CD4-positive, alpha-beta T cell (primary cell): ENCODE measurements at regions of chr10 and their contacts with region 1.

Region 1: DNA sequence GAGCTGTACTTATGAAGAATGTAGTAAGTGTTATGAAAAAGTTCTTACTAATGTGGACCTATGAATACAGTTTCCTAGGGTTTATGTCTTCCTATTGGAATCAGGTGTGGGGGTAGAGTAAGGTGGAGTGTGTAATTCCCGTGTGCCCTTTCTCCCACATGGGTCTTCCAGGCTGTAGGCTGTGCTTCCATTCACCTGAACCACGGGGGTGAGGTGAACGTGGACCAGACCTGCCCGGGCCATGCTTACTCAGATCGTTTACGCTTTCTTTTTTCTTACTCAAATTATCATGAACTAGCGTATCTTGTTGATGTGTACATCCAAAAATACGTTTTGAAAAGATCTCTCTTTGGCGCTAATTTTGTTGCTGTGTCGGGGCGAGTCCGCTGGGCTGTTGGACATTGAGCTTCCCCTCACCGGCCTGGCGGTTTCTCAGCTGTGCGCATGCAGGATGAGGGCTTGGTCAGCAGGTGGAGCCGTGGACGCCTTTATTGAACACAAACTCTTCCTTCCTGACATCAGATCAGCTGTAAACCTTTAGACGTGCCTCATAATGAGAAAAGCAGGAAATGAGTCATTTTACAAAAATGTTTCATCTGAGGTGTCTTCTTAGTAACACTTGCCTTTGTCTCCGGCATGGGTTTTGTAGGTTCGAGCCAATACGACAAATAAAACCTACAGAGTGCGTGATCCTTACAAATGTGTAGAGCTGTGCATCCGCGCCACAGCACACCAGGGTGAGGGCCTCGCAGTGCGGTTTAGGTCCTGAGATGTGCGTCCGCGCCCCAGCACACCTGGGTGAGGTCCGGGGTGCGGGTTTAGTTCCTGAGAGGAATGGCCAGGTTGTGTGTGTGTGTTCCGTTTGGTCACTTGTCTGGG is 53.8 kb downstream of the WDR37 start:
- DNase-seq: peak; percentile 62 to 90 (median 72)
- ATAC-seq: peak; percentile 90
- H3K4me3 ChIP-seq: peak overlapping the region; percentile 27
- H3K4me3 Mint-ChIP-seq: peak overlapping the region; percentile 11
- H3K27ac ChIP-seq: peak overlapping the region; percentile 71 to 85
- H3K27ac Mint-ChIP-seq: peak overlapping the region; percentile 79
- H3K4me1 ChIP-seq: peaks cover 13% of the 10 kb centered on the region
- H3K4me1 Mint-ChIP-seq: peaks cover 26% of the 10 kb centered on the region
- H3K27me3 ChIP-seq: no peaks in the 10 kb centered on the region
- H3K27me3 Mint-ChIP-seq: no peaks in the 10 kb centered on the region
- CTCF ChIP-seq: peak; percentile 86

Region 2: GRCh38 chr10:1380088-1380651 is 270.1 kb after region 1 on chr10:
- CTCF ChIA-PET with region 1: no interaction called
- POLR2A ChIA-PET with region 1: no interaction called
- intact Hi-C with region 1: loop called in 1 of 2 experiments (anchors 10 kb)
- DNase-seq: peak in 1 of 14 experiments; percentile 19
- ATAC-seq: no peak
- H3K4me3 ChIP-seq: no peak overlapping the region
- H3K4me3 Mint-ChIP-seq: no peak overlapping the region
- H3K27ac ChIP-seq: no peak overlapping the region
- H3K27ac Mint-ChIP-seq: no peak overlapping the region
- H3K4me1 ChIP-seq: no peaks in the 10 kb centered on the region
- H3K4me1 Mint-ChIP-seq: no peaks in the 10 kb centered on the region
- H3K27me3 ChIP-seq: peaks cover 15 to 28% of the 10 kb centered on the region in 2 experiments
- H3K27me3 Mint-ChIP-seq: peaks cover 57% of the 10 kb centered on the region
- CTCF ChIP-seq: no peak

Region 3: DNA sequence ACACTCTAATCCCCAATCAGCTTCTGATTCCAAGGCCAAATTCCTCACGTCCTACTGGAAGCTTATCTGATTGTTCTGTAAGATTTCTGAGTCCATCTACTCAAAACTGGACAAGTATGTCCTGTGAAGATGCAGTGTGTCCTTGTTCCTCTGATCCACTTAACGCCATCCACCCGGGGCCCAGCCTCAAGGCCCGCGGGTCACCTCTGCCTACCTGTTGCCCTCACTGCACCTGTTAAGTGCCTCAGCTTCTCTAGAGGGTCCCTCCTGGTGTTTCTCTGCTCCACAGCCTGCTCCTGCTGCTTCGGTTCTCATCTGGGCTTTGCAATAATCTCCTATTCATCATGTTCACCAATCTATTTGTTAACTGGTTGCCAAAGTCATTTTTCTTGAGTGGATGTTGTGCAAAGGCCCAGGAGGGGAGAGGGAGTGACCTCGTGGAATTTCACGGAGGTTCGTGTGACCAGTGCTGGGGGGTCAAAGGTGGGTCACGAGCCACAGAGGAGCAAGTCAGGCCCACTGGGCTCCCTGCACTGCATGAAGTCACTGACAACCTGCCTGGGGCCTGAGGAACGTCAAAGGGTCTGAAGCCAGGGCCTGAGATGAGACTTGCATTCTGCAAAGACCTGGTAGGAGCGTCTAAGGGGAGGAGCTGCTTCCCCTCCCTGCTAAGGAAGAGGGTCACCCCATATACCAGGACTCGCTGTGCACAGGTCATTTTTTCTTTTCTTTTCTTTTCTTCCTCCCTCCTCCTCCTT is 284.3 kb after region 1 on chr10:
- CTCF ChIA-PET with region 1: no interaction called
- POLR2A ChIA-PET with region 1: no interaction called
- intact Hi-C with region 1: loop called (anchors 2 to 10 kb)
- DNase-seq: no peak
- ATAC-seq: no peak
- H3K4me3 ChIP-seq: no peak overlapping the region
- H3K4me3 Mint-ChIP-seq: no peak overlapping the region
- H3K27ac ChIP-seq: no peak overlapping the region
- H3K27ac Mint-ChIP-seq: no peak overlapping the region
- H3K4me1 ChIP-seq: no peaks in the 10 kb centered on the region
- H3K4me1 Mint-ChIP-seq: no peaks in the 10 kb centered on the region
- H3K27me3 ChIP-seq: no peaks in the 10 kb centered on the region
- H3K27me3 Mint-ChIP-seq: peaks cover 6% of the 10 kb centered on the region
- CTCF ChIP-seq: no peak

Region 4: DNA sequence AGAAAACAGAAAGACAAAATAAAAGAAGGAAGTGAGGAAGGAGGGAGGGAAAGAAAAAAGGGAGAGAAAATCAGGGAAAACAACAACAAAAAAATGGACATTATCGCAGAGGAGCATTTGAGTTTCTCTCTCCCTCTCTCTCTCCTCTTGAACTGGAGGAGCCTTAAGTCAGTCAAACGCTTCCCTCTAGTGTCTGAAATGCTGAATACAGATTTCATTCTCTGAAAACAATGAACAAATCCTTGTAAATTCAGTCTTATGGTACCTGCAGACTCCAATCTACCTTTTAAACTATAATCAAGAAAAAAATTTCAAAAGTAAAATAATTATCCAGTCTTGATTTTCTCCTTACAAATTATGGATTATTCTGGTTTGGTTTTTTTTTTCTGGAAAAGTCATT is 1868.1 kb after region 1 on chr10:
- CTCF ChIA-PET with region 1: no interaction called
- POLR2A ChIA-PET with region 1: no interaction called
- intact Hi-C with region 1: loop called in 1 of 2 experiments (anchors 5 kb)
- DNase-seq: peak in 3 of 14 experiments; percentile 15 to 39 (median 32)
- ATAC-seq: no peak
- H3K4me3 ChIP-seq: no peak overlapping the region
- H3K4me3 Mint-ChIP-seq: no peak overlapping the region
- H3K27ac ChIP-seq: no peak overlapping the region
- H3K27ac Mint-ChIP-seq: no peak overlapping the region
- H3K4me1 ChIP-seq: no peaks in the 10 kb centered on the region
- H3K4me1 Mint-ChIP-seq: no peaks in the 10 kb centered on the region
- H3K27me3 ChIP-seq: no peaks in the 10 kb centered on the region
- H3K27me3 Mint-ChIP-seq: no peaks in the 10 kb centered on the region
- CTCF ChIP-seq: peak; percentile 42

Region 5: DNA sequence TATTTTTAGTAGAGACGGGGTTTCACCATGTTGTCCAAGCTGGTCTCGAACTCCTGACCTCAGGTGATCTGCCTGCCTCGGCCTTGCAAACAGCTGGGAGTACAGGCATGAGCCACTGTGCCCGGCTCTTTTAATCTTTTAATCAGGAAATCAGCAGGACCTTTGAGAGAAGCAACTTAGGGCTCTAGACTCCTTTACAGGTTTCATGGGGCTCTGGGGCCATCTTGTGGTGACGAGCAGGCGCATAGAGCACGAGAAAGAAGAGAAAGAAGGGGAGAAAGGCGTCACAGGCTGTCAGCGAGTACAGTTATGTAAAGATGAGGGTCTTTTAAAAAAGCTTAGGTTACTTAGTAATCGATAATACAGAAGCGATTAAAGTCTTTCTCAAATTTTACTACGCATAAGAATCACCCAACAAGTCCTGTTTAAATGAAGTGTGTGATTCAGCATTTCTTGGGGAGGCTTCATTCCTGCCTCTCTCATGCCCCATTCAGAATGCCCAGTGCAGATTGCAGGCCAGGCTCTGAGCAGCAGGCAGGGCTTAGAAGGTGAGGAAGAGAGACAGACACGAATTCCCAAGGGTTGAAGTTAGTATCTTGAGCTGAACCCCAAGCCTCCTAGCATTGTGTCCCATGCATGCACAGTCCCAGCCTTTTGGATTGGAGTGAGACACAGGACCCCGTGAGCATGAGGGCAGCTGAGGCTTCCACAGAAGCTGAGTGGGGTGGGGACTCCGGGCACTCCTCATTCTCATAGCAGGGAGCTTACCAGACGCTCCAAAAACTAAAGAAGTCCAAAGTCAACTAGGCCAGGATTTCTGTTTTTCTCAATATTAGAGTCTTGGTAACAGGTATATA is 1933.7 kb after region 1 on chr10:
- CTCF ChIA-PET with region 1: interaction called, 6 read pairs
- POLR2A ChIA-PET with region 1: no interaction called
- intact Hi-C with region 1: loop called (anchors 1 to 5 kb)
- DNase-seq: peak in 12 of 14 experiments; percentile 13 to 69 (median 35)
- ATAC-seq: peak; percentile 59
- H3K4me3 ChIP-seq: no peak overlapping the region
- H3K4me3 Mint-ChIP-seq: no peak overlapping the region
- H3K27ac ChIP-seq: no peak overlapping the region
- H3K27ac Mint-ChIP-seq: no peak overlapping the region
- H3K4me1 ChIP-seq: peaks cover 3% of the 10 kb centered on the region
- H3K4me1 Mint-ChIP-seq: no peaks in the 10 kb centered on the region
- H3K27me3 ChIP-seq: peaks cover 2 to 9% of the 10 kb centered on the region in 2 experiments
- H3K27me3 Mint-ChIP-seq: peaks cover 16% of the 10 kb centered on the region
- CTCF ChIP-seq: peak; percentile 59